Left colon (tissue), 2 donors: ENCODE measurements at regions of chr2 and their contacts with region 1.

Region 1: DNA sequence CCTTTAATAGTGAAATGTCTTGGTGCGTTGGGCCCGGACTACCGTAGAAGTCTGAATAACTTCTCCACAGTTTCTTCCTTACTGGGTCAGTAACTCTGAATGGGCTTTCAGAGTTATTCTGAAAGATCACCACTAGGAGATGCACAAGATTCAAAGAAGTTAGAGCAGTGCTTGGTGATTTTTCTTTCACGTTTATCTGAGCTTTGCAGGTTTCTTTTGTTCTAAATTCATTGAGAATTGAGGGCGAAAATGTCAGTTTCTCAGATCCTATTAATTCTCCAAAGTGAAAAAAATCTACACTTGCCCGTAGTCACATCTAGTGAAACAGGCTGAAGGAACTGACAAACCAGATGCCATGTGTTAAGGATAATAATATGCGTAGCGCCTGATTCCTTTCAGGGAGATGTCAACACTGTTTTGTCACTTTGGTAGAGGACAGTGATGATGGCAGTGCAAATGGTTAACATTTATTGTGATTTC is 70.1 kb downstream of the QPCT start:
- DNase-seq: peak in 1 of 2 donors; percentile 18
- ATAC-seq: peak; percentile 91

Region 2: DNA sequence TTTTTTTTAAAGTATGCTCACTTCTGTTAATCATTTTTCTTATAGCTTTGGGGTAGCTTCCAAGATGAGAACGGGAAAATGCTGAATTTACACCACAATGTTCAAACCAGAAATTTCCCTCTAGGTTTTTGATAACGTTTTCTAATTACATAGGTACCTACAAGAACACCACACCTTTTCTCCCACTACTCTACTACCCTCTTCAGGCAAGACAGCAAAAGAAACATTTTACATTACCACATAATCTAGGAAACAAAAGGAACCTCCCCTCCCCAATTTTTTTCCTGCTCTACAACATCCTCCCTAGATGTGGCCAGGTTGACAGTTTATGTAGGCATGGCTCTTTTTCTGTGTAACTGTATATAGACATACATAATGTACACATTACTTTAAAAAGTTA is 150.7 kb before region 1 on chr2:
- intact Hi-C with region 1: no loop called
- DNase-seq: no peak
- ATAC-seq: no peak

Region 3: GRCh38 chr2:37832590-37833197 is 418.2 kb after region 1 on chr2:
- intact Hi-C with region 1: loop called (anchors 5 to 10 kb)
- DNase-seq: peak; percentile 79 to 98
- ATAC-seq: peak; percentile 100